CD8-positive, alpha-beta T cell (primary cell): ENCODE measurements at regions of chr3 and their contacts with region 1.

Region 1: GRCh38 chr3:163139618-163140017 is 1643.0 kb downstream of the OTOL1 start:
- DNase-seq: no peak
- ATAC-seq: no peak
- H3K4me3 ChIP-seq: no peak overlapping the region
- H3K4me3 Mint-ChIP-seq: no peak overlapping the region
- H3K27ac ChIP-seq: no peak overlapping the region
- H3K27ac Mint-ChIP-seq: no peak overlapping the region
- H3K4me1 ChIP-seq: no peaks in the 10 kb centered on the region
- H3K4me1 Mint-ChIP-seq: no peaks in the 10 kb centered on the region
- H3K27me3 ChIP-seq: no peaks in the 10 kb centered on the region
- H3K27me3 Mint-ChIP-seq: no peaks in the 10 kb centered on the region
- CTCF ChIP-seq: no peak

Region 2: GRCh38 chr3:162978136-162978535 is 161.5 kb before region 1 on chr3:
- CTCF ChIA-PET with region 1: no interaction called
- POLR2A ChIA-PET with region 1: no interaction called
- intact Hi-C with region 1: no loop called
- DNase-seq: no peak
- ATAC-seq: no peak
- H3K4me3 ChIP-seq: no peak overlapping the region
- H3K4me3 Mint-ChIP-seq: no peak overlapping the region
- H3K27ac ChIP-seq: no peak overlapping the region
- H3K27ac Mint-ChIP-seq: no peak overlapping the region
- H3K4me1 ChIP-seq: no peaks in the 10 kb centered on the region
- H3K4me1 Mint-ChIP-seq: no peaks in the 10 kb centered on the region
- H3K27me3 ChIP-seq: no peaks in the 10 kb centered on the region
- H3K27me3 Mint-ChIP-seq: no peaks in the 10 kb centered on the region
- CTCF ChIP-seq: no peak

Region 3: DNA sequence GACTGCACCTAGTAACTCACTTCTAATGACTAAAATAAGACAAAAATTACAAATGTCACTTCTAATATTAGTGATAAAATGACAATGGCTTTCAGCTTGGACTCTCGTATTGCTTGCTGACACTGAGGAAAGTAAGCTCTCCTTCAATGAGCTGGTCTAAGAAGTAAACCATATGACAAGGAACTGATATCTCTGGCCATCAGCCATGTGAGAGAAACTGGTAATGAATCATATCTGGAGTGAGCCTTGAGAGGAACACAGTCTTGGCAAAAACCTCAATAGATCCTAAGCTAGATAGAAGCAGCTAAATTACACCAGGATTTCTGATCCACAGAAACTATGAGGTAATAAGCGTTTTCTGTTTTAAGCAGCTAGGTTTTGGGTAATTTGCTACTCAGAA is 67.9 kb before region 1 on chr3:
- CTCF ChIA-PET with region 1: no interaction called
- POLR2A ChIA-PET with region 1: no interaction called
- intact Hi-C with region 1: loop called in 1 of 2 experiments (anchors 2 kb)
- DNase-seq: no peak
- ATAC-seq: no peak
- H3K4me3 ChIP-seq: no peak overlapping the region
- H3K4me3 Mint-ChIP-seq: no peak overlapping the region
- H3K27ac ChIP-seq: no peak overlapping the region
- H3K27ac Mint-ChIP-seq: no peak overlapping the region
- H3K4me1 ChIP-seq: no peaks in the 10 kb centered on the region
- H3K4me1 Mint-ChIP-seq: no peaks in the 10 kb centered on the region
- H3K27me3 ChIP-seq: no peaks in the 10 kb centered on the region
- H3K27me3 Mint-ChIP-seq: no peaks in the 10 kb centered on the region
- CTCF ChIP-seq: no peak